ENCODE measurements at regions of chr1 and their contacts with region 1.

Region 1: DNA sequence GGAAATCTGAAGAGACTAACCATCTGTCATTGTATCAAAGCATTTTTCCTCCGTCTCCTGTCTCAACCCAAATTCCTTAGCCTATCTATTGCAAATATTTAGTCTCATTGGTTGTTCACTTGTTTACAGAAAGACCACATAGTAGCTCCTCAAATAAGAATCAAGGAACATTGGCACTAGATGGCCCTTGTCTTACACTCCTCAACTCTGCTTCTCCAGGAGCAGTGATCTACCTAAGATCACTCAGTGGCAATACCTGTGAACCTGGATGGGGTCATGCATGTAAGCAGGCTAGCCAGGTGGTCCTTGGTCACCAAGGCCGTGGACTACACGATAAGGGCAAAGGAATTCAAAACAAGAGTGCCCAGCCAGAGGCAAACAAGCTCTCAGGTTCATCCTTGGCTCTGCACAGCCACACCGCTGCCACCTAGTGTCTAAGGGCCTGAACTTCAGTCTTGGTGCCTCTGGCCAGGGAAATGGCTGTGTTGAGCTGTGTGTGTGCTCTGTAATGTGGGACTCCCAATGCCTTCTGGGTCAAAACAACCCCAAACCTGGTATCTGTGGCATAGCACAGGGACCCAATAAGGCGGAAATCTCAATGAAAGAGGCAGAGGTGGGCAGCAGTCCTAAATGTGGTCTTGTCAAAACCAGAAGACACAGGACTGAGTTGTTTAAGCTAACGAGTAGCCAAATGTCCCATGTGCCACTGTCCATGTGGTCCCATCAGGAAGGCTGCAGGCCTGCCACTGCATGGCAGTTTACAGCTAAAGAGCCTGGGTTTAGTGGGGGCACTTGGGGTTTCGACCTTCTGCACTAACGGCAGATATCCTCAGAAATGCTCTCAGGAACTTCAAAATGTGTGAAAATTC is 54.5 kb downstream of the GPR161 start:
- DNase-seq: peak; percentile 78
- H3K4me3 ChIP-seq: no peak overlapping the region
- H3K27ac ChIP-seq: no peak overlapping the region
- H3K4me1 ChIP-seq: no peaks in the 10 kb centered on the region
- CTCF ChIP-seq: peak; percentile 90

Region 2: GRCh38 chr1:167715157-167715999 is 366.9 kb before region 1 on chr1:
- CTCF ChIA-PET with region 1: no interaction called
- POLR2A ChIA-PET with region 1: no interaction called
- intact Hi-C with region 1: loop called (anchors 5 kb)
- DNase-seq: peak; percentile 94
- H3K4me3 ChIP-seq: peak overlapping the region; percentile 75
- H3K27ac ChIP-seq: peak overlapping the region; percentile 73
- H3K4me1 ChIP-seq: peaks cover 47% of the 10 kb centered on the region
- CTCF ChIP-seq: peak; percentile 94

Region 3: GRCh38 chr1:167904652-167905130 is 177.6 kb before region 1 on chr1:
- CTCF ChIA-PET with region 1: no interaction called
- POLR2A ChIA-PET with region 1: no interaction called
- intact Hi-C with region 1: loop called (anchors 5 kb)
- DNase-seq: no peak
- H3K4me3 ChIP-seq: no peak overlapping the region
- H3K27ac ChIP-seq: no peak overlapping the region
- H3K4me1 ChIP-seq: peaks cover 6% of the 10 kb centered on the region
- CTCF ChIP-seq: no peak

Measured in OCI-LY7 (cell line).